Esophagus muscularis mucosa (tissue), 4 donors: ENCODE measurements at regions of chr9 and their contacts with region 1.

Region 1: GRCh38 chr9:133406480-133407307 is 11.1 kb downstream of the REXO4 start:
- DNase-seq: no peak
- H3K4me3 ChIP-seq: no peak overlapping the region
- H3K27ac ChIP-seq: no peak overlapping the region
- H3K4me1 ChIP-seq: peaks cover 0 to 15% (median 3%) of the 10 kb centered on the region in 4 donors
- H3K27me3 ChIP-seq: no peaks in the 10 kb centered on the region
- CTCF ChIP-seq: peak; percentile 81 to 95 (median 90)
- EP300 ChIP-seq: no peak
- POLR2A ChIP-seq: no peak

Region 2: DNA sequence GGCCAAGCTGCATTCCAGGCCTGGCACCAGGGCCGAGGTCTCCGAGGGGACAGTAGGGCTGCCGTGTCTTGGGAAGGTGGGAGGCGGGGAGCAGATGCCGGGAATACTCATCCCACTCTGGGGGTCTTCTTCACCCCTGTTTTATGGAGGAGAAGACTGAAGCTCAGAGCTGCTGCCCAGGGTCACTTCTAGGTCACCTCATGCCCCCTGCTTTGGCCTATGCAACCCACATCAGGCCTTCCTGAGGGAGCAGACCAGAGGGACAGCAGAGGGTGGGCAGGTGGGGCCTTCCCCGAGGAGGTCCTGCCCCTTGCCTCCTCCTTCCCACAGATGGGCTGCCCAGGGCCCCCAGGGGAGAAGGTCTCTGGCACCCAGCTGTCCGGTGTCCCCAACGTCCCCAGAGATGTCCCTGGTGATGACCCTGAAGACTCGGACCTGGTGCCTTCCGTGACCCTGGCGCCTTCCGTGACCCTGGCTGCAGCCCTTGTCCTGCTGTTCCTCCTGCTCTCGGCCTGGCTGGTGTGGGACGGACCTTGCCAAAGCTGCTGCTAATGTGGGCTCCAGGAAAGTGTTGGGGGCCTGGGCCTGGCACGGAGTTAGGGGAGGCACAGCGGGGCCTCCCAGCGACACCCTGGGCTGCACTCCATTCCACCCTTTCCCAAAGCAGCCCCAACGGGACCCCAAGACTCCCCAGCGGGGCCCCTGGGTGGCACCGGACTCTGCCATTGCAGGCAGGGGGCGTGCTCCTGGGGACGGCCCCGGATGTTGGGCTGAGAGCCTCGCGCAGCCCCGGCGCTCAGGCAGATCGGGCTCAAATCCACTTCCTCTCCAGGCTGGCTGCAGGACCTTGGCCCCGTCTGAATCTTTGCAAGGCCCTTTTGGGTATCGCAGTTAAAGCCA is 78.9 kb after region 1 on chr9:
- intact Hi-C with region 1: loop called (anchors 2 kb)
- DNase-seq: no peak
- H3K4me3 ChIP-seq: no peak overlapping the region
- H3K27ac ChIP-seq: no peak overlapping the region
- H3K4me1 ChIP-seq: peaks cover 0 to 11% (median 7%) of the 10 kb centered on the region in 4 donors
- H3K27me3 ChIP-seq: peaks cover 0 to 56% (median 0%) of the 10 kb centered on the region in 4 donors
- CTCF ChIP-seq: no peak
- EP300 ChIP-seq: no peak
- POLR2A ChIP-seq: no peak